ENCODE measurements at regions of chr21 and their contacts with region 1.

Region 1: GRCh38 chr21:25507522-25507921 is 99.8 kb downstream of the MRPL39 start:
- DNase-seq: no peak
- ATAC-seq: no peak
- H3K4me3 Mint-ChIP-seq: no peak overlapping the region
- H3K27ac Mint-ChIP-seq: no peak overlapping the region
- H3K4me1 Mint-ChIP-seq: peaks cover 30% of the 10 kb centered on the region
- H3K27me3 Mint-ChIP-seq: no peaks in the 10 kb centered on the region

Region 2: DNA sequence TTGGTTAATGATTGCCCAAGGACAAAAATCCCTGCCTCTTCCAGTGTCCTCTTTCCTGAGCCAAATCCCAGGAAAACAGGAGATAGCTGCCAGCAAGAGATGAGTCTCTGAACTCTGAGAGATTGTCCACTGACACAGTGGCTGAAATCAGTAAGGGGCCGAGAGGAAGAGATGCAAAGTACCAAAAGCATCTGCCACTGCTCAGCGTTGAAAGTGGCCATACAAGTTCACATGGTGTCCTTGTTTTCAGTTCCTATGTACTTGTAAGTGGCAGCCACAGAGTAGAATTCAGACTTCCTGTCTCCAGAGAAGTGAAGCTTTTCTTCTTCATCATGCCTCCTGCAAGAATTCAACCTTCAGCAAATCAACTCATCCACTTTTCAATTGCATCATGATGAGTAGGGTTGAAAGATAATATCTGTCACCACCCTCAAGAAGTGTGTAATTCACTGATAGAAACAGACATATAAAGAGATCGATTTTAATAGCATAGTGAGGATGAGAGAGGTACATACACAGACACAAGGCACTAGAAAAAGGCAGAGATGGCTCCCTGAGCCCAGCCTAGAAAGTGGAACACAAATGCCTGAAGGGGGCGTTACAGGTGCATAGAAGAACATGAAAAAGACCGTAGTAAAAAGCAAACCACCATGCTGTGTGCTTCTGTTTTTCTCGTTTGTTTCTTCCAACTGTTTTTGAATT is 86.0 kb before region 1 on chr21:
- CTCF ChIA-PET with region 1: interaction called, 15 read pairs
- POLR2A ChIA-PET with region 1: no interaction called
- DNase-seq: peak; percentile 79
- ATAC-seq: peak; percentile 98
- H3K4me3 Mint-ChIP-seq: peak overlapping the region; percentile 66
- H3K27ac Mint-ChIP-seq: peak overlapping the region; percentile 88
- H3K4me1 Mint-ChIP-seq: peaks cover 27% of the 10 kb centered on the region
- H3K27me3 Mint-ChIP-seq: no peaks in the 10 kb centered on the region

Region 3: DNA sequence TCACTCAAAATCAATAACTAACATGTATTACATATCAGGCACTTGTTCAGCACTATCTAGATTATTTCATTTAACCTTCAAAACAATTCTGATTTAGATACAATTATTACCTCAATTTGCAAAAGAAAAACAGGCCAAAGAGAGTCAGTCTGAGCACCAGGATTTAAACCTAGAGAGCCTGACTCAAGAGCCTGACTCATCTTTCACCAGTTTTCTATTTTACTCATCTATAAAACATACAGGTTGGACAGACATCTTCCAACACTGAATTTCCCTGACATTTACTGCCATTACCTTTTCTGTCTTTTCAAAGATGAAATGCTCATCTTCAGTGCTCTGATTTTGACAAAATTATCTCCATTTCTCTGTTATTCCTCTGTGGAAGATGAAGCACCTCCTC is 16.8 kb before region 1 on chr21:
- CTCF ChIA-PET with region 1: interaction called, 10 read pairs
- POLR2A ChIA-PET with region 1: interaction called, 3 read pairs
- DNase-seq: no peak
- ATAC-seq: no peak
- H3K4me3 Mint-ChIP-seq: no peak overlapping the region
- H3K27ac Mint-ChIP-seq: no peak overlapping the region
- H3K4me1 Mint-ChIP-seq: peaks cover 34% of the 10 kb centered on the region
- H3K27me3 Mint-ChIP-seq: no peaks in the 10 kb centered on the region

Region 4: DNA sequence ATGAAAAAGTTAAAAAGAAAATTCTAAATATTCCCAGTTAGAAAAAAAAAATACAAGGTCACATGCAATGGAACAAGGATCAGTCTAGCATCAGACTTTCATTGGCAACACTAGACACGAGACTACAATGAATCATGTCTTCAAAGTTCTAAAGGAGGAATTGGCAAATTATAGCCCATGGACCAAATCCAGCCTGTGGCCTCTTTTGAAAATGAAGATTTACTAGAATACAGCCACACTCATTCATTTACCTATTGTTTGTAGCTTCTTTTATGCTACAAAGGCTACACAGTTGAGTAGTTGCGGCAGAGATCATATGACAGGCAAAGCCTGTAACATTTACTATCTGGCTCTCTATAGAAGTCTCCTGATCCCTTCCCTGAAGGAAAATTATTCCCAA is 28.3 kb after region 1 on chr21:
- CTCF ChIA-PET with region 1: no interaction called
- POLR2A ChIA-PET with region 1: no interaction called
- DNase-seq: no peak
- ATAC-seq: no peak
- H3K4me3 Mint-ChIP-seq: no peak overlapping the region
- H3K27ac Mint-ChIP-seq: no peak overlapping the region
- H3K4me1 Mint-ChIP-seq: no peaks in the 10 kb centered on the region
- H3K27me3 Mint-ChIP-seq: no peaks in the 10 kb centered on the region

Region 5: DNA sequence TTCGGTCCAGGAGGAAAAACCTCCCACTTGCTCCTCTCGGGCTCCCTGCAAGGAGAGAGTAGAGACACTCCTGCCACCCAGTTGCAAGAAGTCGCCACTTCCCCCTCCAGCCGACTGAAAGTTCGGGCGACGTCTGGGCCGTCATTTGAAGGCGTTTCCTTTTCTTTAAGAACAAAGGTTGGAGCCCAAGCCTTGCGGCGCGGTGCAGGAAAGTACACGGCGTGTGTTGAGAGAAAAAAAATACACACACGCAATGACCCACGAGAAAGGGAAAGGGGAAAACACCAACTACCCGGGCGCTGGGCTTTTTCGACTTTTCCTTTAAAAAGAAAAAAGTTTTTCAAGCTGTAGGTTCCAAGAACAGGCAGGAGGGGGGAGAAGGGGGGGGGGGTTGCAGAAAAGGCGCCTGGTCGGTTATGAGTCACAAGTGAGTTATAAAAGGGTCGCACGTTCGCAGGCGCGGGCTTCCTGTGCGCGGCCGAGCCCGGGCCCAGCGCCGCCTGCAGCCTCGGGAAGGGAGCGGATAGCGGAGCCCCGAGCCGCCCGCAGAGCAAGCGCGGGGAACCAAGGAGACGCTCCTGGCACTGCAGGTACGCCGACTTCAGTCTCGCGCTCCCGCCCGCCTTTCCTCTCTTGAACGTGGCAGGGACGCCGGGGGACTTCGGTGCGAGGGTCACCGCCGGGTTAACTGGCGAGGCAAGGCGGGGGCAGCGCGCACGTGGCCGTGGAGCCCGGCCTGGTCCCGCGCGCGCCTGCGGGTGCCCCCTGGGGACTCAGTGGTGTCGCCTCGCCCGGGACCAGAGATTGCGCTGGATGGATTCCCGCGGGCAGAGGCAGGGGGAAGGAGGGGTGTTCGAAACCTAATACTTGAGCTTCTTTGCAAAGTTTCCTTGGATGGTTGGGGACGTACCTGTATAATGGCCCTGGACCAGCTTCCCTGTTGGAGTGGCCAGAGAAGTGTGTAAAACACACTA is 54.4 kb after region 1 on chr21:
- CTCF ChIA-PET with region 1: interaction called, 7 read pairs
- POLR2A ChIA-PET with region 1: interaction called, 10 read pairs
- DNase-seq: peak; percentile 79
- ATAC-seq: peak; percentile 74
- H3K4me3 Mint-ChIP-seq: peak overlapping the region; percentile 88
- H3K27ac Mint-ChIP-seq: peak overlapping the region; percentile 92
- H3K4me1 Mint-ChIP-seq: peaks cover 59% of the 10 kb centered on the region
- H3K27me3 Mint-ChIP-seq: no peaks in the 10 kb centered on the region